Calu3 (cell line): ENCODE measurements at regions of chr1 and their contacts with region 1.

Region 1: DNA sequence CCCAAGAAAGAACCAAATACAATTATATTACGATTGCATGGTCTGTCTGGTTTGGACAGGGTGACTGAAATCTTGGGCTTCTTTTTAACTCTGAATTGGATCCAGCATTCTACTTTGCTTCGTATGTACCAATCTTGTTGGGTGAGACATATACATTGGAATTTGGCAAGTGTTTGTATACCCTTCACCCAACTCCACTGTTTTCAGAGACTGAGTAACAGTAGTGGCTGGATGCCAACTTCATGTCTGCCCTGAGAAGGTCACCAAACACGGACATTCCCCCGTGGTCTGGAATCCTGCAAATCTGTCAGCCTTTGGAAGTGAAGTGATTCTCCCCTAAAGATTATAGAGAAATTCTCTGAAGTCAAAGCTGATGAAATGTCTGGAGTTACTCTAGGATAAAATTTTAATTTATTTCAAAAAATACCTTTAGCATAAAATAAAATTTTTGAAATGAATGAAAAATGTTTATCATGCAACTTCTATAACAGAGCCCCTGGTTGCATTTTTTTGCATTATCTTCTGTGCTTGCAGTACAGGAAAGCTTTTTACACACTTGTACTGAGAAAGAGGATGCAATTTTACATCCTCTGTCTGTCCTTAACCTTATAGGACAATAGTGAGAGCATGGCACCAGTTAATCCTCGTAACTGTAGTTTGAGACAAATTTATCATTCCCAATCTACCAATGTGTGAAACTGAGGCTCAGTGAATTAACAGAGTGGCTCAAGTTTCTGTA is 201.8 kb downstream of the DISC1 start:
- DNase-seq: peak; percentile 79
- H3K4me3 Mint-ChIP-seq: peak overlapping the region; percentile 52
- H3K27ac Mint-ChIP-seq: peak overlapping the region; percentile 84
- H3K4me1 Mint-ChIP-seq: peaks cover 42% of the 10 kb centered on the region
- H3K27me3 Mint-ChIP-seq: no peaks in the 10 kb centered on the region
- CTCF ChIP-seq: no peak

Region 2: GRCh38 chr1:231395076-231395995 is 433.0 kb before region 1 on chr1:
- CTCF ChIA-PET with region 1: no interaction called
- intact Hi-C with region 1: no loop called
- DNase-seq: peak; percentile 47
- H3K4me3 Mint-ChIP-seq: peak overlapping the region; percentile 50
- H3K27ac Mint-ChIP-seq: peak overlapping the region; percentile 78
- H3K4me1 Mint-ChIP-seq: peaks cover 82% of the 10 kb centered on the region
- H3K27me3 Mint-ChIP-seq: no peaks in the 10 kb centered on the region
- CTCF ChIP-seq: no peak

Region 3: GRCh38 chr1:231626535-231626945 is 201.8 kb before region 1 on chr1 and contains the start of gene DISC1:
- CTCF ChIA-PET with region 1: no interaction called
- intact Hi-C with region 1: loop called (anchors 10 kb)
- DNase-seq: peak; percentile 75
- H3K4me3 Mint-ChIP-seq: peak within 1 kb of the TSS; percentile 86
- H3K27ac Mint-ChIP-seq: peak within 1 kb of the TSS; percentile 50
- H3K4me1 Mint-ChIP-seq: peaks cover 13% of the 10 kb centered on the region
- H3K27me3 Mint-ChIP-seq: peaks cover 29% of the 10 kb centered on the region
- CTCF ChIP-seq: no peak
- total RNA-seq, gene DISC1: 6.6 and 9.8 TPM in 2 replicates

Region 4: GRCh38 chr1:231702801-231703395 is 125.5 kb before region 1 on chr1:
- CTCF ChIA-PET with region 1: no interaction called
- intact Hi-C with region 1: no loop called
- DNase-seq: no peak
- H3K4me3 Mint-ChIP-seq: no peak overlapping the region
- H3K27ac Mint-ChIP-seq: no peak overlapping the region
- H3K4me1 Mint-ChIP-seq: no peaks in the 10 kb centered on the region
- H3K27me3 Mint-ChIP-seq: no peaks in the 10 kb centered on the region
- CTCF ChIP-seq: no peak

Region 5: GRCh38 chr1:231757101-231757404 is 71.3 kb before region 1 on chr1:
- CTCF ChIA-PET with region 1: no interaction called
- intact Hi-C with region 1: loop called (anchors 1 kb)
- DNase-seq: no peak
- H3K4me3 Mint-ChIP-seq: no peak overlapping the region
- H3K27ac Mint-ChIP-seq: no peak overlapping the region
- H3K4me1 Mint-ChIP-seq: no peaks in the 10 kb centered on the region
- H3K27me3 Mint-ChIP-seq: no peaks in the 10 kb centered on the region
- CTCF ChIP-seq: no peak

Region 6: DNA sequence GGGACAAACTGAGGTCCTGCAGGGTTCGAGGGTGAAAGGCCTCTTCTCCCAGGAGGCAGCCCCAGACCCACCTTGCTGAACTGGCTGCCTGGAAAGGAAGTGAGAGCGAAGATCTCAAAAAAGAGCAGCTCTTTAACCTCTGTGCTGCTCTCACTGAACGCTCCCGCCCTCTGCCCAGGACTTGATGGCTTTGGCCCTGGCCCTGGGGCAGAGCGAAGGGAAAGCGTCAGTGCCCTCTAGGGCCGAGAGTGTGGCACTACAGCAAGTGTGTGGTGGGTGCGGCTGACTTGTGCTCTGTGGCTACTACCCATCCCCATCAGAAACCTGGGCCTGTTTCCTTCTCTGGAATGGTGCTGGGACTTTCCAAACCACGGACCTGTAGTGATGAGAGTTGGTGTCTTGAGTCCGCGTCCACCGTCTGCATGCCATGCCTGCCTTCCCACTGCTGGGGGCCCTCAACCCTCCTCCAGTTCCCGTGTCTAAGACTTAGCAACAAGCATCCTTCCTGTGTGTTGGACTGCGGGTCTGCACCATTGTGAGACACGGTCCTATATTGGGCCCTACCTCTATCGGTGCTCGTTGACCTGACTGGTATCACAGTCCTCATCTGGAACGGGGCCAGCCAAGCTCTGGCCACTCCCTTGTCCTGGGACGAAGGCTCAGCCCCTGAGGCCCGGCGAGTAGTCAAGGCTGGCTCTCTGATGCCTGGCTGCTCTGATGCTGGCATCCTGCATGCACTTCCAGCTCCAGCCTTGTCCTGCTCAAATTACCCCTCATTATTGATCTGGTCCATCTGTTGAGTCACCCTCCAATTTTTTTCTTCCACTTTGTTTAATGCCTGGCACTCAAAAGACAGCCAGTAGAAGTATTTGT is 21.5 kb before region 1 on chr1:
- CTCF ChIA-PET with region 1: no interaction called
- intact Hi-C with region 1: loop called (anchors 2 kb)
- DNase-seq: peak; percentile 71
- H3K4me3 Mint-ChIP-seq: no peak overlapping the region
- H3K27ac Mint-ChIP-seq: no peak overlapping the region
- H3K4me1 Mint-ChIP-seq: peaks cover 9% of the 10 kb centered on the region
- H3K27me3 Mint-ChIP-seq: no peaks in the 10 kb centered on the region
- CTCF ChIP-seq: peak; percentile 63